ENCODE measurements at regions of chr16 and their contacts with region 1.

Region 1: GRCh38 chr16:58638148-58639036 is 8.8 kb upstream of the CNOT1 start:
- DNase-seq: peak; percentile 84
- H3K4me3 Mint-ChIP-seq: no peak overlapping the region
- H3K27ac Mint-ChIP-seq: peak overlapping the region; percentile 63
- H3K4me1 Mint-ChIP-seq: peaks cover 6% of the 10 kb centered on the region
- H3K27me3 Mint-ChIP-seq: no peaks in the 10 kb centered on the region
- CTCF ChIP-seq: peak; percentile 42

Region 2: GRCh38 chr16:58515125-58515870 is 123.1 kb before region 1 on chr16 and contains the start of gene SETD6:
- CTCF ChIA-PET with region 1: interaction called, 5 read pairs
- POLR2A ChIA-PET with region 1: interaction called, 4 read pairs
- intact Hi-C with region 1: loop called (anchors 1 kb)
- DNase-seq: peak; percentile 88
- H3K4me3 Mint-ChIP-seq: peak within 1 kb of the TSS; percentile 93
- H3K27ac Mint-ChIP-seq: peak within 1 kb of the TSS; percentile 92
- H3K4me1 Mint-ChIP-seq: peaks cover 6% of the 10 kb centered on the region
- H3K27me3 Mint-ChIP-seq: no peaks in the 10 kb centered on the region
- CTCF ChIP-seq: peak; percentile 18
- total RNA-seq, gene SETD6: 18.4 and 19.5 TPM in 2 replicates

Measured in MCF 10A (cell line).